Common myeloid progenitor, CD34-positive (primary cell): ENCODE measurements at regions of chr13 and their contacts with region 1.

Region 1: DNA sequence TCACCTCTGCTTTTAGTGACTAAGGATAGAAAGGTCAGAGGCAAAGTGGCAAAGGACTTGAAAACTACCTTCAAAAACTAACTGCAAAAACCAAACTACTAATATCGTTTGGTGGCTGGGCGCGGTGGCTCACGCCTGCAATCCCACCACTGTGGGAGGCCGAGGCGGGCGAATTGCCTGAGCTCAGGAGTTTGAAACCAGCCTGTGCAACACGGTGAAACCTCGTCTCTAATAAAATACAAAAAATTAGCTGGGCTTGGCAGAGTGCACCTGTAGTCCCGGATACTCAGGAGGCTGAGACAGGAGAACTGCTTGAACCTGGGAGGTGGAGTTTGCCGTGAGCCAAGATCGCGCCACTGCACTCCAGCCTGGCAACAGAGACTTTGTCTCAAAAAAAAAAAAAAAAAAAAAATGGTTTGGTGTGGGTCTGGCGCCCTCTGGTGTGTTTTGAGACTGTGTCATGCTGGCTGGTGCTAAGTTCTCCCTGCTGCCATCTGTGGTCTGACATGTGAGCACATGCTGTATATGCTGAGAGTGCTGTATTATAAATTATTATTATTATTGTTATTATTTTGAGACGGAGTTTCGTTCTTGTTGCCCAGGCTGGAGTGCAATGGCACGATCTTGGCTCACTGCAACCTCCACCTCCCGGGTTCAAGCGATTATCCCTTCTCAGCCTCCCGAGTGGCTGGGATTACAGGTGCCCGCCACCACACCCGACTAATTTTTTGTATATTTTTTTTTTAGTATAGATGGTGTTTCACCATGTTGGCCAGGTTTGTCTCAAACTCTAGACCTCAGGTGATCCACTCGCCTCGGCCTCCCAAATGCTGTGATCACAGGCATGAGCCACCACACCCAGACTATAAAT is 36.0 kb upstream of the RNF17 start:
- DNase-seq: peak; percentile 91 to 96 (median 95)
- H3K4me3 ChIP-seq: no peak overlapping the region
- H3K27ac ChIP-seq: no peak overlapping the region
- H3K4me1 ChIP-seq: peaks cover 0 to 8% (median 5%) of the 10 kb centered on the region in 4 experiments
- H3K27me3 ChIP-seq: no peaks in the 10 kb centered on the region

Region 2: GRCh38 chr13:24671386-24672107 is 56.4 kb before region 1 on chr13:
- CTCF ChIA-PET with region 1: interaction called, 13 read pairs
- POLR2A ChIA-PET with region 1: no interaction called
- DNase-seq: peak; percentile 19 to 45 (median 38)
- H3K4me3 ChIP-seq: peak overlapping the region in 6 of 7 experiments; percentile 25 to 80 (median 54)
- H3K27ac ChIP-seq: no peak overlapping the region
- H3K4me1 ChIP-seq: peaks cover 0 to 16% (median 10%) of the 10 kb centered on the region in 4 experiments
- H3K27me3 ChIP-seq: peaks cover 0 to 2% (median 0%) of the 10 kb centered on the region in 5 experiments

Region 3: GRCh38 chr13:24683838-24684599 is 43.9 kb before region 1 on chr13:
- CTCF ChIA-PET with region 1: interaction called, 169 read pairs
- POLR2A ChIA-PET with region 1: no interaction called
- DNase-seq: peak; percentile 52 to 61 (median 58)
- H3K4me3 ChIP-seq: no peak overlapping the region
- H3K27ac ChIP-seq: no peak overlapping the region
- H3K4me1 ChIP-seq: peaks cover 4 to 33% (median 30%) of the 10 kb centered on the region in 4 experiments
- H3K27me3 ChIP-seq: peaks cover 0 to 29% (median 16%) of the 10 kb centered on the region in 5 experiments

Region 4: DNA sequence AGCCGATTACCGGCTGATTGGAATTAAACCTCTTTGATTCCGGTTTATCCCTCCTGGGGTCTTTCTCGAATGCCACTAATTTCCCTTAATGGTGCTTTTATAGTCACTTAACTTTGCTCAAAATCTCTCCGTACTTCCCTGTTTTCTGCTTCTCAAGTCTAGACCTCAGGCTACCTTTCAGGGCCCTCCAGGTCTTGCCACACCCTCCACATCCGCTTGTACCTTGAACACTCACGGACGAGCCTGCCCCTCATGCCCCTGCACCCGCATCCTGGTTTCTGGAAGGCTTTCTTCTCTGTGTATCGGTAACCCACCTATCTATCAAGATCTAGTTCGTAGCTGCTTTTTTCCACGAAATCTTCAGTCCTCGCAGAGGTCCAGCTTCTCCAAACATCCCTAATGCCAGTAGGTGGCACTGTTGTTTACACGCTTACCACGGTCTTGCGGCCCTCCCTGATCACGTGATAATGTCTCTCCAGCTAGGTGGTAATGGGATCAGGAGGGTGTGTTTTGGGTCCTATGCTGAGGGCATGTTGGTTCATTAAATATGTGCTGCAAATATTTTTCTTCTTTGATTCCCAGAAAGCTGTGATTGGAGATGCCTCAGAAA is 34.0 kb before region 1 on chr13:
- CTCF ChIA-PET with region 1: interaction called, 169 read pairs
- POLR2A ChIA-PET with region 1: no interaction called
- DNase-seq: peak; percentile 81 to 83 (median 81)
- H3K4me3 ChIP-seq: peak overlapping the region in 3 of 7 experiments; percentile 4 to 67 (median 46)
- H3K27ac ChIP-seq: no peak overlapping the region
- H3K4me1 ChIP-seq: peaks cover 0 to 8% (median 3%) of the 10 kb centered on the region in 4 experiments
- H3K27me3 ChIP-seq: peaks cover 0 to 22% (median 12%) of the 10 kb centered on the region in 5 experiments

Region 5: GRCh38 chr13:24700539-24700938 is 27.4 kb before region 1 on chr13:
- CTCF ChIA-PET with region 1: interaction called, 18 read pairs
- POLR2A ChIA-PET with region 1: no interaction called
- DNase-seq: no peak
- H3K4me3 ChIP-seq: no peak overlapping the region
- H3K27ac ChIP-seq: no peak overlapping the region
- H3K4me1 ChIP-seq: peaks cover 0 to 8% (median 2%) of the 10 kb centered on the region in 4 experiments
- H3K27me3 ChIP-seq: peaks cover 0 to 10% (median 0%) of the 10 kb centered on the region in 5 experiments

Region 6: GRCh38 chr13:24709186-24709913 is 18.6 kb before region 1 on chr13:
- CTCF ChIA-PET with region 1: interaction called, 174 read pairs
- POLR2A ChIA-PET with region 1: interaction called, 3 read pairs
- DNase-seq: peak; percentile 93 to 99 (median 96)
- H3K4me3 ChIP-seq: peak overlapping the region in 2 of 7 experiments; percentile 26 to 34
- H3K27ac ChIP-seq: no peak overlapping the region
- H3K4me1 ChIP-seq: peaks cover 9 to 41% (median 28%) of the 10 kb centered on the region in 4 experiments
- H3K27me3 ChIP-seq: no peaks in the 10 kb centered on the region

Region 7: DNA sequence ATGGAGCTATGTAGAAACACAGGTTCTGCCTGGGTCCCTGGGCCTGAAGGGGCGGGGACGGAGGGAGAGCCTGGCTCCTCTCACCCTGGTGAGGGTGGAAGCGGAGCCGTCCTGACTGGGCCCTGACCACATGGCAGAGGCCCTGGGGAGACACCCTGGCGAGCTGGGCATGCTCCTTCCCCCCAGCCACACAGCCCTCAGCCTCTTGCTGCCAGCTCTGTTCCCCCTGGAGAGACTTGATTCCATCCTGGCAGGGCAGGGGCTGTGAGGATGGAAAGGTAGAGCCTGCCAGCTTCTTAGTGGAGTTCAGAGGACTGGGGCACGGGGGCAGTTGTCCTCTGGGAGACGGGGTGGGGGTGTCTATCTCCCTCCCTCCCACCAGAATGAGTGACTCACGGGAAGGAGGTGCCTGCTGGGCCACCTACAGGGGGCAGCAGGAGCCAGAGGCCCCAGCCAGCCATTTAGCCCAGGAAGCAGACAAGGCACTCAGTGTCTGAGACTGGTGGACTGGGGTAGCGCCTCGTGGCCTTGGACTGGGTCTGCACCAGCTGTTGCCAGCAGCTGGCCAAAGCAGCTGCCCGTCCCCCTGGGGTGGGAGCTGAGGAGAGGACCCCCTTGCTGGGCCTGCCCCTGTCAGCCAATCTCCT is 13.2 kb after region 1 on chr13:
- CTCF ChIA-PET with region 1: interaction called, 13 read pairs
- POLR2A ChIA-PET with region 1: no interaction called
- DNase-seq: peak in 1 of 3 donors; percentile 26
- H3K4me3 ChIP-seq: no peak overlapping the region
- H3K27ac ChIP-seq: no peak overlapping the region
- H3K4me1 ChIP-seq: peaks cover 0 to 15% (median 11%) of the 10 kb centered on the region in 4 experiments
- H3K27me3 ChIP-seq: peaks cover 0 to 31% (median 25%) of the 10 kb centered on the region in 5 experiments